ENCODE measurements at regions of chr3 and their contacts with region 1.

Region 1: DNA sequence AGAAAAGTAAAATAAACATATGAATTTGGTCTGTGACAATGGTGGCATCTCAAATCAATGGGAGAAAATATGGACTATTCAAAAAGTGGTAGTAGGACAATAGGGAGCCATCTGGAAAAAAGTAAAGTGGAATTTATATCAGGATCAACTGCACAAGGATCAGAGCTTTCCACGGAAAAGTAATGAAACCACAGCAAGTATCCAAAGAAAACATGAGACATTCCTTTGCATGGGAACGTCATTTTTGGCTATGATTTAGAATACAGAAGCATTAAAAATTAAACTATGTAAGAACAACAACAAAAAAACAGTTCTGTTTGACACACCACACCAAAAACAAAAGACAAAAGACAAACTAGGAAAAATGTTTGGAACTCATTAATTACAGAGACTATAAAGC is 18.7 kb downstream of the CRBN start:
- DNase-seq: no peak
- ATAC-seq: no peak
- H3K4me3 ChIP-seq: no peak overlapping the region
- H3K27ac ChIP-seq: no peak overlapping the region
- H3K4me1 ChIP-seq: no peaks in the 10 kb centered on the region
- H3K27me3 ChIP-seq: no peaks in the 10 kb centered on the region
- CTCF ChIP-seq: no peak

Region 2: DNA sequence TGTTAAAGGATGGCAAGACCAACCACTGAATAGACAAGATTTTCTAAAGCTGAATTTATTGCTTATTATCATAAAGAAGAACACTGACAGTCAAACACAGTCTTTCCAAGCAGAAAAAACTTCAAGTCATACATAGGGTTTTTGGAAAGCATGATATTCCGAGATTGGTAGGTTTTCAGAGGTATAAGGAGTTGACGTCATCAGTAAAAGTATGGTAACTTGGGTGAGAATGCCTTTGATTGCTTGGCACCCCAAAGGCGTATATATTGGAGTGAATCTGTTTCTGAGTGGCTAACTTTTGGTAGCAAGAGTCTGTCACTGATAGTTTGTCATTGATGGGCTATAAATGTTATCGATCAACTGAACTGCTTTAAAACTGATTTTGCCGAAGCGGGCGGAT is 1290.1 kb before region 1 on chr3:
- CTCF ChIA-PET with region 1: no interaction called
- POLR2A ChIA-PET with region 1: interaction called, 10 read pairs
- in situ Hi-C with region 1: no loop called
- intact Hi-C with region 1: no loop called
- DNase-seq: no peak
- ATAC-seq: no peak
- H3K4me3 ChIP-seq: no peak overlapping the region
- H3K27ac ChIP-seq: no peak overlapping the region
- H3K4me1 ChIP-seq: no peaks in the 10 kb centered on the region
- H3K27me3 ChIP-seq: no peaks in the 10 kb centered on the region
- CTCF ChIP-seq: no peak

Region 3: GRCh38 chr3:3366386-3366785 is 205.6 kb after region 1 on chr3:
- CTCF ChIA-PET with region 1: no interaction called
- POLR2A ChIA-PET with region 1: no interaction called
- in situ Hi-C with region 1: no loop called
- intact Hi-C with region 1: no loop called
- DNase-seq: no peak
- ATAC-seq: no peak
- H3K4me3 ChIP-seq: no peak overlapping the region
- H3K27ac ChIP-seq: no peak overlapping the region
- H3K4me1 ChIP-seq: no peaks in the 10 kb centered on the region
- H3K27me3 ChIP-seq: no peaks in the 10 kb centered on the region
- CTCF ChIP-seq: no peak

Measured in Panc1 (cell line).